GM18951 (cell line): ENCODE measurements at regions of chr1 and their contacts with region 1.

Region 1: GRCh38 chr1:243748706-243749283 is 101.2 kb downstream of the AKT3 start:
- POLR2A ChIP-seq: no peak

Region 2: GRCh38 chr1:243354511-243355153 is 394.2 kb before region 1 on chr1:
- in situ Hi-C with region 1: loop called (anchors 25 kb)
- POLR2A ChIP-seq: no peak

Region 3: GRCh38 chr1:245356891-245357585 is 1608.2 kb after region 1 on chr1:
- in situ Hi-C with region 1: no loop called
- POLR2A ChIP-seq: no peak